ENCODE measurements at regions of chr13 and their contacts with region 1.

Region 1: GRCh38 chr13:31199849-31200636 is at the start of gene B3GLCT:
- DNase-seq: peak; percentile 85
- H3K4me3 ChIP-seq: peak within 1 kb of the TSS; percentile 86 to 95 (median 91)
- H3K27ac ChIP-seq: peak within 1 kb of the TSS; percentile 95 to 99 (median 97)
- H3K4me1 ChIP-seq: peaks cover 3 to 15% (median 8%) of the 10 kb centered on the region in 4 donors
- H3K27me3 ChIP-seq: no peaks in the 10 kb centered on the region
- CTCF ChIP-seq: peak in 3 of 5 experiments; percentile 72 to 89 (median 82)
- EP300 ChIP-seq: no peak
- POLR2A ChIP-seq: no peak
- total RNA-seq, gene B3GLCT: 1.6 to 5.7 (median 3.9) TPM

Region 2: GRCh38 chr13:31022288-31022895 is 177.7 kb before region 1 on chr13:
- in situ Hi-C with region 1: no loop called
- intact Hi-C with region 1: no loop called
- DNase-seq: no peak
- H3K4me3 ChIP-seq: no peak overlapping the region
- H3K27ac ChIP-seq: no peak overlapping the region
- H3K4me1 ChIP-seq: no peaks in the 10 kb centered on the region
- H3K27me3 ChIP-seq: no peaks in the 10 kb centered on the region
- CTCF ChIP-seq: no peak
- EP300 ChIP-seq: no peak
- POLR2A ChIP-seq: no peak

Region 3: DNA sequence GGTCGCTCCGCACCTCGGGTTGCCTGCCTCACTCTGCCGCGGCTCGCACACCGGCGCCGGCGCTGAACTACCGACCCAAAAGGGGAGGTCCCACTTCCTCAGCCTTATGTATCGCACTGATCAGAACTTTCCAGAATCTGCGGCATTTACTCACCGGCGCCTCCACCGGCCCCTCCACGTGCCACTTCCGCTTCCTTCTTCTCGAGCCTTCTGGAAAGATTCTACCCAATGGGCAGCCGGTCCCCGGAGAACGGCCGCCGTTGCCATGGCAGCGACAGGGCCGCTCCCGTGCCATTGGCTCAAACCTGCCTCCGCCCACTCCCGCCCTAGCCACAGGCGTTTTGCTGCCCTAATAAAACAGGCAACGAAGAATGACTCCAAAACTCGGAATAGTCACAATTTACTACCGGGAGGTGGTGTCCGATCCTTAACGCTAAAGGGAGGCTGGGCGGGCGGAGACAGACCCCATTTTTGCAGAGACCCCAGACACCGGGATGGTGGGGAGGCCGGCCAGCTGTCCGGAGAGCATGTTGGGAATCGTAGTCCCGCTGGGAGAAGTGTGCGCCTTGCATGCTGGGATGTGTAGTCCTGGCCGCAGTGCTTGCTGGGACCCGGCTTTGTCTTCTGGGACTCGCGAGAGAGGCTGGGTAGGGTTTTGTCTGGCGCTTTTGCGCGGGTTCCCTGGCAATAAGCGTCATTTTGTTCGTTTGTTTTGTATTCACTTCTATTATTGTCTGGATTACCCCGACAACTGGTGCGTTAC is 38.0 kb before region 1 on chr13 and contains the start of gene HSPH1:
- in situ Hi-C with region 1: no loop called
- intact Hi-C with region 1: loop called (anchors 2 kb)
- DNase-seq: peak; percentile 99
- H3K4me3 ChIP-seq: peak within 1 kb of the TSS; percentile 65 to 90 (median 82)
- H3K27ac ChIP-seq: peak within 1 kb of the TSS; percentile 89 to 99 (median 92)
- H3K4me1 ChIP-seq: peaks cover 8 to 26% (median 14%) of the 10 kb centered on the region in 4 donors
- H3K27me3 ChIP-seq: no peaks in the 10 kb centered on the region
- CTCF ChIP-seq: peak in 2 of 5 experiments; percentile 15 to 34
- EP300 ChIP-seq: peak; percentile 14
- POLR2A ChIP-seq: peak; percentile 84
- total RNA-seq, gene HSPH1: 16.1 to 58.3 (median 30.7) TPM

Region 4: GRCh38 chr13:31670831-31671617 is 471.0 kb after region 1 on chr13:
- in situ Hi-C with region 1: no loop called
- intact Hi-C with region 1: no loop called
- DNase-seq: no peak
- H3K4me3 ChIP-seq: no peak overlapping the region
- H3K27ac ChIP-seq: no peak overlapping the region
- H3K4me1 ChIP-seq: no peaks in the 10 kb centered on the region
- H3K27me3 ChIP-seq: no peaks in the 10 kb centered on the region
- CTCF ChIP-seq: no peak
- EP300 ChIP-seq: no peak
- POLR2A ChIP-seq: no peak

Measured in transverse colon (tissue), 4 donors.